ENCODE measurements at regions of chr17 and their contacts with region 1.

Region 1: DNA sequence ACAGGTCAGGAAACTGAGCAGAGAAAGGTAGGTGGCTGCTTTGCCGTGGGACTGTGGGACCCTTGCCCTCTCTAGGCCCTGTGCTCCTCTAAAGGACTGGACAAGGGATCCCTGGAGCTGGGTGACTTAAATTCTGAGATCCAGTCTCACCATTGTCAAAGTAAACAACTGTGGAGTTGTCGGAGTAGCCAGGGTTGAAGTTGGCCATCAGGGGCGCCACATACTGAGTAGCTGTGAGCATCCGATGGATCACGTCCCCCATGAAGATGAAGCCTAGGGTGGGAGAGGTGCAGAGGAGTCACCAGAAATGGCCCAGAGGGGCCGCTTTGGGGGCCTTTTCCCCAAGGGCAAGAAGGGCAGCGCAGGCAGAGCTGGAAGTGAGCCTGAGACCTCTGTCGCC is 43.5 kb downstream of the PLXDC1 start:
- DNase-seq: no peak
- ATAC-seq: no peak
- H3K4me3 ChIP-seq: no peak overlapping the region
- H3K4me3 Mint-ChIP-seq: no peak overlapping the region
- H3K27ac ChIP-seq: no peak overlapping the region
- H3K27ac Mint-ChIP-seq: no peak overlapping the region
- H3K4me1 ChIP-seq: no peaks in the 10 kb centered on the region
- H3K4me1 Mint-ChIP-seq: peaks cover 4% of the 10 kb centered on the region
- H3K27me3 ChIP-seq: no peaks in the 10 kb centered on the region
- H3K27me3 Mint-ChIP-seq: no peaks in the 10 kb centered on the region
- CTCF ChIP-seq: no peak

Region 2: DNA sequence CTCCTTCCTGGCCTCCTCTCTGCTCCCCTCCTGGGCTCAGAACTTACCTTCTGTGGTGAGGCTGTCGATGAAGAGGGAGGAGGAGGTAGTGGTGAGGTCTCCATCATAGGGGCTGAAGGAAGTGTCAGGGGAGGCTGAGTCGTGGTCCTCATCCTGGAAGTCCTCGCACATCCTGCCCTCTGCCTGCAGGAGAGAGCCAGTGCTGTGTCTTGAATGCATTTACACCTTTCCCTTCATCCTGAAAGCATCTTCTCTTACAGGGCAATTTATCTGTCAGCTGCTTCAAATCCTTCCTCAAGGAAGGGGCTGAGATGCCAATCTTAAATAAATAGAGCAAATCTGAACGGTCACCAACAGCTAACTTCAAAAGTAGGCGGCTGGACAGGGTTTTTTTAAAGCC is 30.1 kb before region 1 on chr17:
- CTCF ChIA-PET with region 1: no interaction called
- POLR2A ChIA-PET with region 1: no interaction called
- intact Hi-C with region 1: loop called in 1 of 2 experiments (anchors 5 kb)
- DNase-seq: no peak
- ATAC-seq: no peak
- H3K4me3 ChIP-seq: no peak overlapping the region
- H3K4me3 Mint-ChIP-seq: no peak overlapping the region
- H3K27ac ChIP-seq: no peak overlapping the region
- H3K27ac Mint-ChIP-seq: no peak overlapping the region
- H3K4me1 ChIP-seq: no peaks in the 10 kb centered on the region
- H3K4me1 Mint-ChIP-seq: no peaks in the 10 kb centered on the region
- H3K27me3 ChIP-seq: no peaks in the 10 kb centered on the region
- H3K27me3 Mint-ChIP-seq: no peaks in the 10 kb centered on the region
- CTCF ChIP-seq: no peak

Measured in CD4-positive, alpha-beta T cell (primary cell).